ENCODE measurements at regions of chr3 and their contacts with region 1.

Region 1: DNA sequence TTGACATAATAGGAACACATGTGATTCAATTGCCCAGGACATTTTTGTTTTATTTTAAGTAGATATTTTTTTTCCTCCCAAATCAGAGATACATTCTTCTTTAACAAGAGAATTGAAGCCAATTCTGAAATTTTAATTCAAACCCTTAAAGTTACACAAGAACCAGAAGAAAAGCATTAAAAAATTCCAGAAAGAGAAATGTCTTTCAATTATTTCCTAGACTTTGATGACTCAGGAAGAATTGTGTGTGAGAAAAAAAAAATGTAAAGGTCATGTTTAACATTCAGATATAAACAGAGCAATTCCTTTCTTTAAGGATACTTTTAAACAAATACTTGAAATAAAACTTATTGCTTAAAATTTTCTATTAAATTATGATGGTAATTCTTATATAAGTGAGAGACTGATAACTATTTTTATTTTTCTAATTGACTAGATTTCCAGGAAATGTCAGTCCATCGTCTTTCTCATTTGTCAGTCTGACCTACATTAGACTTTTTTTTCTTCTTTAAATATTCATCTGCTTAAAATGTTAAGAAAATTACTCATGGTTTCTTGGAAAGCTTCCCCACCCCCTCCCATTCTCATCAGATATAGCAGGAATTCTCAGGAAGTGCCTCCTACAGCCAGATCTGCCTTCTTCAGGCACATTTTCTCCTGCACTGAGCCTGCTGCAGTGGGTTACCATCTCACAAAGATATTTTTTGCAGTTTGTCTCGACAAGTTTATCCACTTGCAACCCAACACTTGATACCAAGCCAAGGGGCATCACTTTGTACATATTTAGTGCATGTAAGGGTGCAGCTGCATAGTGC is 261.8 kb upstream of the CBLB start:
- DNase-seq: no peak
- ATAC-seq: peak in 2 of 4 donors; percentile 62 to 88
- H3K4me3 ChIP-seq: no peak overlapping the region
- H3K27ac ChIP-seq: peak overlapping the region in 1 of 12 donors; percentile 17
- H3K4me1 ChIP-seq: peaks cover 0 to 33% (median 11%) of the 10 kb centered on the region in 12 donors
- H3K27me3 ChIP-seq: no peaks in the 10 kb centered on the region
- CTCF ChIP-seq: no peak
- POLR2A ChIP-seq: no peak

Region 2: DNA sequence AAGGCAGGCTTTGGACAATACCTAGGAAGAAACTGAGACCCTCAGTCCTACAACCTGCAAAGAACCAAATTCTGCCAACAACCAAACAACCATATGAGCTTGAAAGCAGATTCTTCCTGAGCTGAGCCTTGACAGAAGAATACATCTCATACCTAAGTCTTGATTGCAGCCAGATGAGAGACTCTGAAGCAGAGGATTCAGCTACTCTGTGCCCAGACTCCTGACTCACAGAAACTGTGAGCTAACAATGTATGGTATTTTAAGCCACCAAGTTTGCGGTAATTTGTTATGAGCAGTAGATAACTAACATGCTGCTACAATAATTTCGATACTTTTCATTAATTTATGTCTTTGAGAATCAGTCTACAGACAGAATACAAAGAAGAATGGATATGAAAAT is 63.3 kb after region 1 on chr3:
- intact Hi-C with region 1: loop called in 1 of 10 experiments (anchors 10 kb)
- DNase-seq: no peak
- ATAC-seq: no peak
- H3K4me3 ChIP-seq: no peak overlapping the region
- H3K27ac ChIP-seq: no peak overlapping the region
- H3K4me1 ChIP-seq: no peaks in the 10 kb centered on the region
- H3K27me3 ChIP-seq: no peaks in the 10 kb centered on the region
- CTCF ChIP-seq: no peak
- POLR2A ChIP-seq: no peak

Measured in heart left ventricle (tissue), 16 donors.